ENCODE measurements at regions of chr1 and their contacts with region 1.

Region 1: GRCh38 chr1:85307987-85308832 is 31.8 kb upstream of the BCL10 start:
- DNase-seq: peak; percentile 83
- H3K4me3 ChIP-seq: peak overlapping the region in 1 of 2 experiments; percentile 10; a peak in 1 of 4 replicates
- H3K27ac ChIP-seq: peak overlapping the region in 1 of 2 experiments; percentile 28; a peak in 3 of 4 replicates
- H3K4me1 ChIP-seq: peaks cover 6 to 7% of the 10 kb centered on the region in 2 experiments; a peak in 2 of 4 replicates
- H3K27me3 ChIP-seq: no peaks in the 10 kb centered on the region
- CTCF ChIP-seq: peak; percentile 99
- EP300 ChIP-seq: peak in 1 of 2 experiments; percentile 26; a peak in 1 of 4 replicates
- RAD21 ChIP-seq: peak; percentile 100

Region 2: DNA sequence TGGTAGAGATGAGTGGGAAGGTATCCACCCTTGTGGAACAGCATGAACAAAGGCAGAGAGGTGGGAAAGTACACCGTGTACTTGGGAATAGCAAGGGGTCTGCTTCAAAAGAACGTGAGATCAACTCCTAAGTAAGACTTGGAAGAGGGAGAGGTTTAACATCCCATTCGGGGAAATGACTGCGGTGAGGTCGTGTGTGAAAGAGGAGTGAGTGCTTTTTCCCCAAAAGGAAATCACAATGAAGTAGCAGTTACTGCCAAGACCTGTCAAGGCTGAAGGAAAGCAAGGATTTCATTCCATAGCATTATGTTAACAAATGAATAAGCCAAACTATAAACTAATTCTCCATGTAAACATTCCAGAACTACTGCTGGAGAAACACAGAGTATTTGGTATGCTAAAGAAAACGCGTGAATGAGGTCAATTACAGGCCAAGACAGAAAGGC is 87.4 kb before region 1 on chr1:
- CTCF ChIA-PET with region 1: no interaction called
- POLR2A ChIA-PET with region 1: no interaction called
- DNase-seq: no peak
- H3K4me3 ChIP-seq: no peak overlapping the region
- H3K27ac ChIP-seq: no peak overlapping the region
- H3K4me1 ChIP-seq: no peaks in the 10 kb centered on the region
- H3K27me3 ChIP-seq: peaks cover 33% of the 10 kb centered on the region
- CTCF ChIP-seq: no peak
- EP300 ChIP-seq: no peak
- RAD21 ChIP-seq: no peak

Region 3: DNA sequence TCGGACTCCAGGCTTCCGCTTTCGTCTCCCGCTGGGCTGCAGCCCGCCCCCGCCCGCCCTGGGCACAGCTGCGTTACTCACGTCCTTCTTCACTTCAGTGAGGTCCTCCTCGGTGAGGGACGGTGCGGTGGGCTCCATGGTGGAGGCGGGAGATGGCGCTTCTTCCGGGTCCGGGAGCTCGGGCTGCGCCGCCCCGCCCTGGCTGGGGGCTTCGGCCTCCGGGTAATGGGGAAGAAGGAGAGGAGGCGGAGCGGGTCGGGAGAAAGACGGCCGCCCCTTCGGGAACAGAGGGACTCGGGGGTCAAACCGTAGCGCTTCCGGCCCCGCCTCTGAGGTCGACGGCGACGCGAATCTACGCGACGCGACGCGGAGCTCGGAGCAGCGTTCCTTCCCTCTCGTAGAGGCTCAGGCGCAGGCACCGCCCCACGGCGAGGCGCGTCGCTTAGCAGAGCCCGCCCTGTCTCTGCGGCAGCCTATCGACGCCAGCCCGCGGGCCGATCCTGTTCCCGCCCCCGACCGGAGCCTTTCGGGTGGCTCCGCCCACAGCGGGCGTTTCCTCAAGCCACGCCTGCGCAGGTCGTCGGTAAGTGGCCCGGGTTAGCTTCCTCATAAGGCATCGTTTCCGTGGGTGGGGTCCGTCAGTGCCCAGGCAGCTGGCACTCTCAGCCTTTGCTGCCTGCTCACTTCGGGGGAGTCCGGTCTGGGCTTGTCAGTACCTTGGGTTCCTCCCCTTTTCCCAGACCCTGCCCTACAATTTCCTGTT is 31.8 kb before region 1 on chr1 and contains the start of gene BCL10:
- CTCF ChIA-PET with region 1: interaction called, 14 read pairs
- POLR2A ChIA-PET with region 1: no interaction called
- DNase-seq: peak; percentile 96
- H3K4me3 ChIP-seq: peak within 1 kb of the TSS; percentile 96 to 97
- H3K27ac ChIP-seq: peak within 1 kb of the TSS; percentile 91 to 92
- H3K4me1 ChIP-seq: peaks cover 22 to 28% of the 10 kb centered on the region in 2 experiments
- H3K27me3 ChIP-seq: no peaks in the 10 kb centered on the region
- CTCF ChIP-seq: no peak
- EP300 ChIP-seq: no peak
- RAD21 ChIP-seq: no peak
- polyA plus RNA-seq, gene BCL10: 5.8 and 6.6 TPM in 2 replicates

Region 4: DNA sequence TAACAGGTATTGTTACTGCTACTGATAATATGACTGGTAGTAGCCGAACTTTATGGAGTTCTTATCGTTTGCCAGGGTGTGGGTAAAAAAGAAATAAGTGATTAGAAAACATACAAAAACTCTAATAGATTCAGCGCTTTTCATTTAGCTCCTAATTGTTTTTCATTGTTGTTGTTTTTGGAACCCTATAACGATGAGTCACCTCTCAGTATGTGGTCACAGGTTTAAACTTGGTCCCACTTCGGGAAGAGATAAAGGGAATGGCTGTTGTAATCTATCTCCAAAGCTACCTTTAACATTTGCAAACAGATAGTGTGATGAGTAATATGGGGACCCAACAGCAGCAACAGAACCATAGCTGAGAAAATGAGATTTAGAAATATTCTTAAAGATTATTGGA is 30.9 kb after region 1 on chr1:
- CTCF ChIA-PET with region 1: interaction called, 15 read pairs
- POLR2A ChIA-PET with region 1: no interaction called
- DNase-seq: no peak
- H3K4me3 ChIP-seq: no peak overlapping the region
- H3K27ac ChIP-seq: peak overlapping the region in 1 of 2 experiments; percentile 98; a peak in 2 of 4 replicates
- H3K4me1 ChIP-seq: peaks cover 2 to 52% of the 10 kb centered on the region in 2 experiments
- H3K27me3 ChIP-seq: no peaks in the 10 kb centered on the region
- CTCF ChIP-seq: no peak
- EP300 ChIP-seq: no peak
- RAD21 ChIP-seq: no peak

Region 5: DNA sequence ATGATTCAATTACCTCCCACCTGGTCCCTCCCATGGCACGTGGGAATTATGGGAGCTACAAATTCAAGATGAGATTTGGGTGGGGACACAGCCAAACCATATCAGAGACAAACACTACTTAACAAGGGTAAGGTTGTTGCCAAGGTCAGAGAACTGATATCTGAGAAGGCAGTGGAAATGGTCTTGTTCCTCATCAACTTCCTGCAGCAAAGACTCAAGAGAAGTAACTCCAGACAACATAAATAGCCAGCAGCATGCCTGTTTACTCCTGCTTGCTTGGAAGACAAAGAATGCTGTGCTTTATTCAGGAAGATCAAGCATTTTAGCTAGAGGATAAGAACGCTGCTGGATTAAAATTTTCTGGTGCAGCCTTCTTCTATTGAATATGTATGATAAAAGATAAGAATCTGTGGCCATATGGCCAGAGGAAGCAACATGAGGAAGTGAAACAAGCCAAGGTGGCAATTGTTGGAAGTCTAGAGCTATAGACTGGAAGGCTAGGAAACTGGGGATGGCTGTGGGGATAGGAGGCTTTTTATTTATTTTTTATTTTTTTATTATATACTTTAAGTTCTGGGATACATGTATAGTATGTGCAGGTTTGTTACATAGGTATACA is 120.4 kb after region 1 on chr1:
- CTCF ChIA-PET with region 1: no interaction called
- POLR2A ChIA-PET with region 1: no interaction called
- DNase-seq: no peak
- H3K4me3 ChIP-seq: no peak overlapping the region
- H3K27ac ChIP-seq: peak overlapping the region; percentile 20 to 70; a peak in 2 of 4 replicates
- H3K4me1 ChIP-seq: peaks cover 0 to 5% of the 10 kb centered on the region in 2 experiments; a peak in 3 of 4 replicates
- H3K27me3 ChIP-seq: no peaks in the 10 kb centered on the region
- CTCF ChIP-seq: no peak
- EP300 ChIP-seq: no peak
- RAD21 ChIP-seq: no peak

Region 6: DNA sequence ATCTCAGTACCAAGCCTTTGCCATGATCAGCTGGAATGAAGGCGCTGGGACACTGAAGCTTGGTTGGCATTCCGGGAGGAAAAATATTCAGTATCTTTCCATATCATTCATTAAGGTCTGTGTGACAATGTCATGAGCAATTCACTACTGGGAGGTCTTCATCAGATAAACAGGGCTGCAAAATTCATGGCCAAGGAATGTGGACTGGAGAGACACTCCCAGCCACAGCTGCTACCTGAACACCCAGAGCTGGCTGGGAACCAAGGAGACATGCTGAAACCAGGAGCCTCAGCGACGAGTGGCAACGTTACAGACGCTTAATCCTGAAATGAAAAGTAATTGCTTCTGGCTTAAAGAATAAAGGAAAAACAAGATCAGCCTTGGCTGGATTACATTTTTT is 187.3 kb after region 1 on chr1:
- CTCF ChIA-PET with region 1: interaction called, 35 read pairs
- POLR2A ChIA-PET with region 1: no interaction called
- DNase-seq: no peak
- H3K4me3 ChIP-seq: no peak overlapping the region; a peak in 1 of 4 replicates
- H3K27ac ChIP-seq: peak overlapping the region; percentile 78 to 99
- H3K4me1 ChIP-seq: peaks cover 33 to 40% of the 10 kb centered on the region in 2 experiments
- H3K27me3 ChIP-seq: no peaks in the 10 kb centered on the region
- CTCF ChIP-seq: no peak
- EP300 ChIP-seq: peak in 1 of 2 experiments; percentile 82; a peak in 1 of 4 replicates
- RAD21 ChIP-seq: no peak

Region 7: GRCh38 chr1:85628791-85629531 is 320.8 kb after region 1 on chr1:
- CTCF ChIA-PET with region 1: interaction called, 14 read pairs
- POLR2A ChIA-PET with region 1: no interaction called
- DNase-seq: no peak
- H3K4me3 ChIP-seq: peak overlapping the region in 1 of 2 experiments; percentile 33; a peak in 2 of 4 replicates
- H3K27ac ChIP-seq: peak overlapping the region; percentile 74 to 87; a peak in 3 of 4 replicates
- H3K4me1 ChIP-seq: peaks cover 0 to 28% of the 10 kb centered on the region in 2 experiments; a peak in 3 of 4 replicates
- H3K27me3 ChIP-seq: no peaks in the 10 kb centered on the region
- CTCF ChIP-seq: no peak
- EP300 ChIP-seq: 0 out of 4 replicates have a peak, but pooled peaks of 1 of the 2 experiments have one; percentile 27
- RAD21 ChIP-seq: no peak

Region 8: GRCh38 chr1:85700422-85700821 is 392.2 kb after region 1 on chr1:
- CTCF ChIA-PET with region 1: interaction called, 25 read pairs
- POLR2A ChIA-PET with region 1: no interaction called
- DNase-seq: no peak
- H3K4me3 ChIP-seq: no peak overlapping the region
- H3K27ac ChIP-seq: peak overlapping the region; percentile 43 to 58; a peak in 3 of 4 replicates
- H3K4me1 ChIP-seq: no peaks in the 10 kb centered on the region; a peak in 1 of 4 replicates
- H3K27me3 ChIP-seq: no peaks in the 10 kb centered on the region
- CTCF ChIP-seq: no peak
- EP300 ChIP-seq: no peak
- RAD21 ChIP-seq: no peak